ENCODE measurements at regions of chr10 and their contacts with region 1.

Region 1: GRCh38 chr10:78938695-78939672 is 129.8 kb upstream of the ZMIZ1 start:
- H3K4me3 Mint-ChIP-seq: no peak overlapping the region
- H3K27ac Mint-ChIP-seq: peak overlapping the region; percentile 63
- H3K4me1 Mint-ChIP-seq: peaks cover 40% of the 10 kb centered on the region
- H3K27me3 Mint-ChIP-seq: peaks cover 10% of the 10 kb centered on the region

Region 2: DNA sequence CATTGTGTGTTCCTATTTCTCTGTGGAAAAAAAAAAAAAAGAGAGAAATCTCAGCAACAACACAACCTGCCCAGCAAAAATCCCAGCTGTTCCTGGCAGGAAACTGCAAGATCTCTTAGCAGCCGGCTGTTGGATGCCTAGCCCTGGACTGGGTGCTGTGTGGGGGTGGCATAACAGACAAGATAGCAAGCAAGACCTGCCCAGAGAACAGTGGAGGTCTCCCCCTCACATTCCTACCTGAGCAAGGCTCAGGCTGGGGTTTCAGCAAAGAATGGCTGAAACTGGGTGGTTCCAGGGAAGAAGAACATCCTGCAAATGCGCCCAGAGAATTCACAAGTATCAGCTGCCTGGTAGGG is 119.0 kb before region 1 on chr10:
- intact Hi-C with region 1: no loop called
- H3K4me3 Mint-ChIP-seq: no peak overlapping the region
- H3K27ac Mint-ChIP-seq: no peak overlapping the region
- H3K4me1 Mint-ChIP-seq: peaks cover 7% of the 10 kb centered on the region
- H3K27me3 Mint-ChIP-seq: peaks cover 3% of the 10 kb centered on the region

Region 3: GRCh38 chr10:78925800-78926319 is 13.1 kb before region 1 on chr10:
- intact Hi-C with region 1: no loop called
- H3K4me3 Mint-ChIP-seq: no peak overlapping the region
- H3K27ac Mint-ChIP-seq: no peak overlapping the region
- H3K4me1 Mint-ChIP-seq: no peaks in the 10 kb centered on the region
- H3K27me3 Mint-ChIP-seq: peaks cover 43% of the 10 kb centered on the region

Region 4: GRCh38 chr10:78960316-78960800 is 21.4 kb after region 1 on chr10:
- intact Hi-C with region 1: loop called (anchors 1 kb)
- H3K4me3 Mint-ChIP-seq: no peak overlapping the region
- H3K27ac Mint-ChIP-seq: peak overlapping the region; percentile 80
- H3K4me1 Mint-ChIP-seq: peaks cover 37% of the 10 kb centered on the region
- H3K27me3 Mint-ChIP-seq: peaks cover 67% of the 10 kb centered on the region